Ovary (tissue), 10 donors: ENCODE measurements at regions of chr18 and their contacts with region 1.

Region 1: DNA sequence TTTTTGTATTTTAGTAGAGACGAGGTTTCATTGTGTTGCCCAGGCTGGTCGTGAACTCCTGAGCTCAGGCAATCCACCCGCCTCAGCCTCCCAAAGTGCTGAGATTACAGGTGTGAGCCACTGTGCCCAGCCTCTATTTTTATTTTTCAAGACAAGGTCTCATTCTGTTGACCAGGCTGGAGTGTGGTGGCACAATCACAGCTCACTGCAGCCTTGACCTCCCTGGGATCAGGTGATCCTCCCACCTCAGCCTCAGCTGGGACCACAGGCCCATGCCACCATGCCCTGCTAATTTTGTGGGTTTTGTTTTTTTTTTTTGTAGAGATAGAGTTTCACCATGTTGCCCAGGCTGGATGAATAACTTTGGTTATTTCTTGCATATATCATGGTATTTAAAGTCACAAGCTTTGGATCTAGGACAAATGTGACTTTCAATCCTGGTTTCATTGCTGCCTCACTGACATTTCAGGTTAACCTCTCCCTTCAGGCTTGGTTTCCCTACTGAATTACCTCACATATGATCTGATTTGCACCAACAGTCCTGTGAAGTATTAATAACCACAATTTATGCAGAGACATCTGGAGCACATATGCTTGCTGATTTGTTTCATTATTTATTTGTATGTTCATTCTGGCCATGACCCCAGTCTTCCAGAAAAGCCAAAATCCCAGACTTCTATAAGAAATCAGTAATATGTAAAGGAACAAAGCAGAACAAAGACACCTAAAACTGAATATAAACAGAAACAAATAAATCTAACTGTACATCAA is 17.5 kb upstream of the RAB31 start:
- DNase-seq: no peak
- H3K4me3 ChIP-seq: no peak overlapping the region
- H3K27ac ChIP-seq: no peak overlapping the region
- H3K4me1 ChIP-seq: peaks cover 3% of the 10 kb centered on the region
- H3K27me3 ChIP-seq: no peaks in the 10 kb centered on the region
- CTCF ChIP-seq: no peak
- EP300 ChIP-seq: no peak
- POLR2A ChIP-seq: no peak

Region 2: DNA sequence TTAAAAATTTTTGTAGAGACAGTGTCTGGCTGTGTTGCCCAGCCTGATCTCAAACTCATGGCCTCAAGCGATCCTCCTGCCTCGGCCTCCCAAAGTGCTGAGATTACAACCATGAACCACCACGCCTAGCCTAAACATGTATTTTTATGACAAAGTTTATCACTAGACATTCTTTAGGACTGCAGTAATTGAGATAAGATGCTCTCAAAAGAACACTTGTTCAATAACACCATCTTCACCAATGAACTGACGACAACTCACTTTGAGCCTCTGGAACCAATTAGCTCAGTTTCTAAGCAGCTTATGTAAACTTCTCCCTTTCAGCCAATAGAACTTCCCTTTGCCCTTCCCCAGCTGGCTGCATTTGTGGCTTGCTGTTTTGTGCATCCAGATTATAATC is 60.9 kb before region 1 on chr18:
- intact Hi-C with region 1: loop called in 1 of 4 experiments (anchors 2 kb)
- DNase-seq: no peak
- H3K4me3 ChIP-seq: no peak overlapping the region
- H3K27ac ChIP-seq: no peak overlapping the region
- H3K4me1 ChIP-seq: no peaks in the 10 kb centered on the region
- H3K27me3 ChIP-seq: no peaks in the 10 kb centered on the region
- CTCF ChIP-seq: no peak
- EP300 ChIP-seq: no peak
- POLR2A ChIP-seq: no peak

Region 3: DNA sequence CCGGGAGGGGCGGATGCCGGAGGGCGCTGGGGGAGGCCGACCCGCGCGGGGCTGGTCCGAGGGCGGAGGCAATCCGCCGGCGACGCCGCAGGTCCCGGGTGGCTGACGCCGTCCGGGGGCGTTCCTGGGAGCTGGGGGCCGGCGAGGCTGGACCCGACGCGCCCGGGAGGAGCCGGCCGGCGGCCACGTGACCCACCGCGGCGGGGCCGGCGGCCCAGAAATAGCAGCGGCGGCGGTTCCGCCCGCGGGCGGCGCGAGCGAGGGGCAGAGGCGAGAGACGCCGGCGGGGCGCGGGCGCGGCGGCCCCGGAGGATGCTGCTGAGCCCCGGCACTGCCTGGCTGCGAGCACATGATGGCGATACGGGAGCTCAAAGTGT is 17.4 kb after region 1 on chr18 and contains the start of gene RAB31:
- intact Hi-C with region 1: no loop called
- DNase-seq: peak; percentile 84 to 90 (median 86)
- H3K4me3 ChIP-seq: peak within 1 kb of the TSS; percentile 90
- H3K27ac ChIP-seq: peak within 1 kb of the TSS; percentile 86 to 96
- H3K4me1 ChIP-seq: peaks cover 10% of the 10 kb centered on the region
- H3K27me3 ChIP-seq: no peaks in the 10 kb centered on the region
- CTCF ChIP-seq: no peak
- EP300 ChIP-seq: no peak
- POLR2A ChIP-seq: peak; percentile 72
- total RNA-seq, gene RAB31: 37.9 to 188 (median 62.8) TPM

Region 4: GRCh38 chr18:9951022-9951859 is 260.6 kb after region 1 on chr18:
- intact Hi-C with region 1: loop called in 1 of 4 experiments (anchors 10 kb)
- DNase-seq: peak in 1 of 5 donors; percentile 37
- H3K4me3 ChIP-seq: no peak overlapping the region
- H3K27ac ChIP-seq: no peak overlapping the region
- H3K4me1 ChIP-seq: no peaks in the 10 kb centered on the region
- H3K27me3 ChIP-seq: no peaks in the 10 kb centered on the region
- CTCF ChIP-seq: peak in 1 of 3 donors; percentile 26
- EP300 ChIP-seq: no peak
- POLR2A ChIP-seq: no peak